ENCODE measurements at regions of chr12 and their contacts with region 1.

Region 1: DNA sequence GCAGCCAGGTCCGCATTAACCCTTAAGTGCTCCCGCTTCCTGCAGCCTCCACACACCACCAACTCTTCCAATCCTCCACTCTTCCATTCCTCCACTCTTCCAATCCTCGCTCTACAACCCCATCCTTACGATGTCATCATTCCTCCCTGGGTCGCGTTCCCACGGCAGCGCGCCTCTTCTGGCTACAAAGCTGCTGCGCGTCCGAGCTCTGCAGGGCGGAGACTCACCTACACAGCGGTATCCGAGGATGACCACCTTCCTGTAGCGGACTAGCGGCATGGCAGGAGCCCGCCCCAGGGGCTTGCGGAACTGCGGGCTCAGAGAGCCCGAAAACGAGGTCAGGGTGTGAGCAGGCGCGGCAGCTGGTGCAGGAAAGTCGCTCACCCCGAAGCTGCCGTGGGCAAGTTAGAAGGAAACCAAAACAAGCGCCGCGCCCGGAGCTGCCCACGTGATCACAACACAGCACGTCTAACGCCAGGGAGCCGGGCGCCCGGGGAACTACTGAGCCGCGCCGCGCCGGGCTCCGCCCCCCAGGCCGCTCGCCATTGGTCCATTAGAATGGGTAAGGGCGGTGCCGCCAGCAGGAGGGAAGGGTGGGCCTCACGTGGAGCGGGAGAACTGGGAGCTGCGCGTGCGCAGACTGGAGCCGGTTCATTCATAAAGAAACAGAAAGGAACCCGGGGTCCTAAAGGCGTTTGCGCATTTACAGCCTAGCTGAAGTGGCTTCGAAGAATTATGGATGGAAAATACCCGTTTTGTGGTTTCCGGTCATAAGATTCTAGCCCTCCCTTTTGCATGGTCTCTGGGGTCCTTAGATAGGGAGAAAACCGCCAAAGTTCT is at the start of gene RHEBL1:
- DNase-seq: peak; percentile 100
- H3K4me3 ChIP-seq: peak within 1 kb of the TSS; percentile 70 to 99 (median 86)
- H3K27ac ChIP-seq: peak within 1 kb of the TSS; percentile 77 to 91 (median 84)
- H3K4me1 ChIP-seq: peaks cover 6 to 23% (median 18%) of the 10 kb centered on the region in 6 donors
- H3K27me3 ChIP-seq: no peaks in the 10 kb centered on the region
- CTCF ChIP-seq: peak in 4 of 11 experiments; percentile 36 to 69 (median 44)
- POLR2A ChIP-seq: peak in 1 of 3 donors; percentile 59
- total RNA-seq, gene RHEBL1: 2.0 to 4.3 (median 2.5) TPM

Region 2: DNA sequence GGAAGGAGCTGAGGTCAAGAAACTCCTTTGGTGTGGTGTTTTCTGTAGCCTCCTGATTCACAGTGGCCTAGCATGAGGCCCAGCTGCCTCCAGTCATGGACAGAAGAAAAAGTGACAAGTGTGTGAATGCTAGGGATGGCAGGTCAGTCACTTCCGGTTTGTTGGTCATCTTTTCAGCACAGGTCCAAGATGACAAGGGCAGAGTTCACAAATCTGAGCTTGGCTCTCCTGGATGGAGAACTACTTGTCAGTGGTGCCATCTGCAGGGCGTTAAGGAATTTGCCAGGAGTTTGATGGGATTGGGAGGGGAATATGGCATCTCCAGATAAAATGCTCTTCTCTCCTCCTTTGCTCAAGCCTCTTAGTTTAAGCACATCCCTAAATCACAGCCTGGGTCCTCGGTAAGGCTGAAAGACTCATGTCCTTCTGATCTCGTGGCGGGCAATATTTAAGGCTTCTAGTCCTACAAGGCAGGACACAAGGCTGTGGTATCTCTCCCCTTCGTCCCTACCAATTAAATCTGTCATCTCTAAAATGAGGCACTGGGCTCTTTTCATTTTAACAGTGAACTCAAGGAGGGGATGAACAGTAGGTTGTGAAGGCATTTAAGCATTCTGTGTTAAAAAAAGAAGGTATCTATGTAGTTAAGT is 51.4 kb after region 1 on chr12:
- intact Hi-C with region 1: loop called (anchors 10 kb)
- DNase-seq: no peak
- H3K4me3 ChIP-seq: no peak overlapping the region
- H3K27ac ChIP-seq: no peak overlapping the region
- H3K4me1 ChIP-seq: peaks cover 0 to 6% (median 0%) of the 10 kb centered on the region in 6 donors
- H3K27me3 ChIP-seq: no peaks in the 10 kb centered on the region
- CTCF ChIP-seq: peak in 9 of 11 experiments; percentile 14 to 62 (median 53)
- POLR2A ChIP-seq: no peak